T-cell (primary cell): ENCODE measurements at regions of chr12 and their contacts with region 1.

Region 1: DNA sequence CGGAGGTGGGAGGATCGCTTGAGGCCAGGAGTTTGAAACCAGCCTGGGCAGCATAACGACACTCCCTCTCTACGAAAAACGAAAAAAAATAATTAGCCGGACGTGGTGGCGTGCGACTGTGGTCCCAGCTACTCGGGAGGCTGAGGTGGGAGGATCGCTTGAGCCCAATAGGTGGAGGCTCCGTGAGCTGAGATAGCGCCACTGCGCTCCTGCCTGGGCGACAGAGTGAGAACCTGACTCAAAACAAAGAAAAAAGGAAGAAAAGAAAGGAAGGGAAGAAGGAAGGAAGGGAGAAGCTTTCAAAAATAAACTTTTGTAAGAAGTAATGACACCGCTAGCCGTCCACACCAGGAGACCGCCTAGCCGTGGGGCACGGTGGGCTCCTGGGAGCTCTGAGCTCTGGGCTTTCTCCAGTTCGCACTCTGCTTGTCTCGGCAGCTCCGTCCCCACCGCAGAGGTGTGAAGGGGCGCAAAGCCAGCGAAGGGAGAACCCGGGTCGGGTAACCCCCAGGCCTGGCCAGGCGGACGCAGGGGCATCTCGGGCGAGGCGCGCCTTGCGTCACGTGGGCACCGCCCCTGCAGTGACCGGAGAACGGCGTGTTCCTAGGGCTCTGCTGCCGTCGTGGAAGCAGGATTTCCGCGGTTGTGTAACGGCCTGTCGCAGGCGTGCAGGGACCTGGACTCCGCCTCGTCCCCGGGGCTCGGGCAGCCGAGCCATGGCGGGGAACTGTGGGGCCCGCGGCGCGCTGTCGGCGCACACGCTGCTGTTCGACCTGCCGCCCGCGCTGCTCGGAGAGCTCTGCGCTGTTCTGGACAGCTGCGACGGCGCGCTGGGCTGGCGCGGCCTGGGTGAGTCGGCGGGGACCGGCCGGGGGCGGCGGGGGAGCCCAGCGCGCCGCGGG is at the start of gene IRAK3:
- DNase-seq: peak in 31 of 35 experiments; percentile 2 to 61 (median 18)
- ATAC-seq: peak; percentile 74 to 84 (median 78)
- H3K4me3 ChIP-seq: peak within 1 kb of the TSS; percentile 45 to 83
- H3K4me3 Mint-ChIP-seq: peak within 1 kb of the TSS; percentile 62 to 84 (median 74)
- H3K27ac ChIP-seq: no peak within 1 kb of the TSS
- H3K27ac Mint-ChIP-seq: no peak within 1 kb of the TSS
- H3K4me1 ChIP-seq: peaks cover 0 to 10% of the 10 kb centered on the region in 2 experiments
- H3K4me1 Mint-ChIP-seq: peaks cover 7 to 13% (median 11%) of the 10 kb centered on the region in 3 donors
- H3K27me3 ChIP-seq: peaks cover 0 to 21% of the 10 kb centered on the region in 2 experiments
- H3K27me3 Mint-ChIP-seq: peaks cover 54 to 61% of the 10 kb centered on the region in 2 donors
- total RNA-seq, gene IRAK3: 0.16 to 1.0 (median 0.39) TPM

Region 2: GRCh38 chr12:65603428-65604351 is 585.1 kb before region 1 on chr12:
- CTCF ChIA-PET with region 1: no interaction called
- POLR2A ChIA-PET with region 1: interaction called in 1 of 2 experiments, 10 read pairs
- DNase-seq: no peak
- ATAC-seq: no peak
- H3K4me3 ChIP-seq: no peak overlapping the region
- H3K4me3 Mint-ChIP-seq: no peak overlapping the region
- H3K27ac ChIP-seq: no peak overlapping the region
- H3K27ac Mint-ChIP-seq: no peak overlapping the region
- H3K4me1 ChIP-seq: no peaks in the 10 kb centered on the region
- H3K4me1 Mint-ChIP-seq: no peaks in the 10 kb centered on the region
- H3K27me3 ChIP-seq: no peaks in the 10 kb centered on the region
- H3K27me3 Mint-ChIP-seq: peaks cover 9 to 15% of the 10 kb centered on the region in 2 donors

Region 3: DNA sequence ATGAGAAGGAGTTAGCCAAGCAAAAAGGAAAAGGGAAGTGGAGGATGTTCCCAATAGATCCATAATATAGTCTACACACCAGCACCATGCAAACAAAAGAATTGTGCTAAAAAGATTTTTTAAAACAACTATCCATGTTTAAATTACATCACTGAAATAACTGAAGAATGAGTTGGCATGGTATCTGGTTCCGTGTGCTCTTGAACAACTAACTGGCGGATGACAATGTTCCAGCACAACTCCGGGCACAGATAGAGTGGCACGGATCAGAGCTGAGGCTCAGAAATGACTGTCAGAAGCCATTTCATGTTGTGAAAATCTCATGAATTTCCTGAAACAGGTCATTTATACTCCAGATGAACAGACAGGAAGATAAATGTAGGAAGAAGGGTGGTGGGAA is 211.5 kb before region 1 on chr12:
- CTCF ChIA-PET with region 1: no interaction called
- POLR2A ChIA-PET with region 1: no interaction called
- DNase-seq: no peak
- ATAC-seq: no peak
- H3K4me3 ChIP-seq: no peak overlapping the region
- H3K4me3 Mint-ChIP-seq: no peak overlapping the region
- H3K27ac ChIP-seq: no peak overlapping the region
- H3K27ac Mint-ChIP-seq: no peak overlapping the region
- H3K4me1 ChIP-seq: no peaks in the 10 kb centered on the region
- H3K4me1 Mint-ChIP-seq: no peaks in the 10 kb centered on the region
- H3K27me3 ChIP-seq: peaks cover 0 to 3% of the 10 kb centered on the region in 2 experiments
- H3K27me3 Mint-ChIP-seq: peaks cover 16 to 21% of the 10 kb centered on the region in 2 donors

Region 4: GRCh38 chr12:66247741-66248140 is 58.9 kb after region 1 on chr12:
- CTCF ChIA-PET with region 1: no interaction called
- POLR2A ChIA-PET with region 1: no interaction called
- DNase-seq: no peak
- ATAC-seq: no peak
- H3K4me3 ChIP-seq: no peak overlapping the region
- H3K4me3 Mint-ChIP-seq: no peak overlapping the region
- H3K27ac ChIP-seq: no peak overlapping the region
- H3K27ac Mint-ChIP-seq: no peak overlapping the region
- H3K4me1 ChIP-seq: no peaks in the 10 kb centered on the region
- H3K4me1 Mint-ChIP-seq: no peaks in the 10 kb centered on the region
- H3K27me3 ChIP-seq: no peaks in the 10 kb centered on the region
- H3K27me3 Mint-ChIP-seq: peaks cover 6 to 7% of the 10 kb centered on the region in 2 donors